H1 (cell line): ENCODE measurements at regions of chr1 and their contacts with region 1.

Region 1: DNA sequence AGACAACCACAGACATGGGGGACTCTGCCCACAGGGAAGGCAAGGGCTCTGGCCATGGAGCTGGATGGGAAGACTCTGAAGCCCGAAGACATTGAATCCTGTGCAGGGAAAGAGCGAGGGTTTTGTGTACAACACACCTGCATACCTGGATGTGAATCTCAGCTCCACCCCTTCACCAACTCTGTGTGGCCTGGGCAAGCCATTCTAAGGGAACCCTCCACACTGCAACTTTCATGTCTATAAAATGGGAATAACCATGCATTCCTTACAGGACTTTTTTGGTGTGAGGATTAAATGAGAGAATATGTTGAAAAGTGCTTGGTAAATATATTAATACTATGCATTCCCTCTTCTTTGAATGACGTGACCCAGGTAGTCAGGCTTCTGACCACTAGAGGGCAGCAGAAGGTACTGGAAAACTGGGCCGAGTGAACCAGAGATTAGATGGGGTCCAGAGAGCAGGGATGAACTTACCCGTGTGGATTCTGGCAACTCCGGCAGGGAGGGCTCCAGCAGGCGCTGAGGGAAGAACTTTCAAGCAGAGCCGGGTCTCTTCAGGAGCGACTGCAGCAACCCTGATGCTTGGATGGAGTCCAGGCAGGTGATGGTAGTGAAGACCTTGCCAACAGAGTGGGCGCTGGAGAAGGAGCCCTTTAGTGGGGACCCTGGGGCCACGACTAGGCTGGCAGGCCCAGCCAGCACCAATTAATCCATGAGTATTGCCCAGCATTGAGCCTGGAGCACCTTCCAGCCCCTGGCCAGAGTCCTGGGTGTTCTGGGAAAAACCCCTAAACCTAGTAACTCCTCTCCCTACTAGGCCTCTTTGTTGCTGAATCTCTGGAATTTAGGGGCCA is 834 bp upstream of the ELF3 start:
- DNase-seq: peak; percentile 38 to 87
- H3K4me3 ChIP-seq: peak overlapping the region in 3 of 4 experiments; percentile 17 to 72 (median 30); a peak in 6 of 8 replicates
- H3K27ac ChIP-seq: peak overlapping the region; percentile 78
- H3K4me1 ChIP-seq: peaks cover 12 to 39% (median 31%) of the 10 kb centered on the region in 4 experiments
- H3K27me3 ChIP-seq: no peaks in the 10 kb centered on the region
- CTCF ChIP-seq: peak in 2 of 3 experiments; percentile 73 to 82; a peak in 3 of 4 replicates
- EP300 ChIP-seq: no peak
- POLR2A ChIP-seq: no peak
- RAD21 ChIP-seq: peak; percentile 80 to 90

Region 2: DNA sequence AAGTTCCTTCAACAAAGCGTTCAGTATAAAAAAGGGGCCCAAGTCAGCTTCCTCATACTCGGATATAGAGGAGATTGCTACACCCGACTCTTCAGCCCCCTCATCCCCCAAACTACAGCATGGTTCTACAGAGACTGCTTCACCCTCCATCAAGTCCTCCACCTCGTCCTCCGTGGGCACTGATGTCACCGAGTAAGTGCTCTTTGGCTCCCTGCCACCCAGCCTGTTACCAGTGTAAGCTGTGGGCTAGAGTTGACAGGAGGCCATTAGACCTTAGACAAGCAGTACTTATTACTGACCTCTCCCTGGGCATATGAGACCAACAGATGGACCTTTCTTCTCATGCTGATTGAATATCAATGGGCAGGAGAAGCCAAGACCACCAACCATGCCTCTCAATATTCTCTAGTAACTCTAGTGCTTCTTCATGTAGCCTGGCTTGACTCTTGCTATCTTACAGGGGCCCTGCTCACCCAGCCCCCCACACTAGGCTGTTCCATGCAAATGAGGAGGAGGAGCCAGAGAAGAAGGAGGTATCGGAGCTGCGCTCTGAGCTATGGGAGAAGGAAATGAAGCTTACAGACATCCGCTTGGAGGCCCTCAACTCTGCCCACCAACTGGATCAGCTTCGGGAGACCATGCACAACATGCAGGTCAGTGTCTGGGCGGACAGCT is 201.5 kb before region 1 on chr1:
- CTCF ChIA-PET with region 1: no interaction called
- POLR2A ChIA-PET with region 1: no interaction called
- DNase-seq: no peak
- H3K4me3 ChIP-seq: no peak overlapping the region
- H3K27ac ChIP-seq: no peak overlapping the region
- H3K4me1 ChIP-seq: no peaks in the 10 kb centered on the region
- H3K27me3 ChIP-seq: no peaks in the 10 kb centered on the region
- CTCF ChIP-seq: no peak
- EP300 ChIP-seq: no peak
- POLR2A ChIP-seq: no peak
- RAD21 ChIP-seq: no peak

Region 3: GRCh38 chr1:201925981-201926645 is 83.4 kb before region 1 on chr1:
- CTCF ChIA-PET with region 1: no interaction called
- POLR2A ChIA-PET with region 1: no interaction called
- DNase-seq: no peak
- H3K4me3 ChIP-seq: no peak overlapping the region
- H3K27ac ChIP-seq: no peak overlapping the region
- H3K4me1 ChIP-seq: no peaks in the 10 kb centered on the region
- H3K27me3 ChIP-seq: no peaks in the 10 kb centered on the region
- CTCF ChIP-seq: no peak
- EP300 ChIP-seq: no peak
- POLR2A ChIP-seq: no peak
- RAD21 ChIP-seq: no peak

Region 4: GRCh38 chr1:202029171-202029665 is 19.7 kb after region 1 on chr1:
- CTCF ChIA-PET with region 1: interaction called, 6 read pairs
- POLR2A ChIA-PET with region 1: interaction called, 74 read pairs
- DNase-seq: no peak
- H3K4me3 ChIP-seq: no peak overlapping the region
- H3K27ac ChIP-seq: no peak overlapping the region
- H3K4me1 ChIP-seq: peaks cover 0 to 1% (median under 1%) of the 10 kb centered on the region in 4 experiments; a peak in 3 of 7 replicates
- H3K27me3 ChIP-seq: no peaks in the 10 kb centered on the region
- CTCF ChIP-seq: no peak
- EP300 ChIP-seq: no peak
- POLR2A ChIP-seq: no peak
- RAD21 ChIP-seq: no peak

Region 5: DNA sequence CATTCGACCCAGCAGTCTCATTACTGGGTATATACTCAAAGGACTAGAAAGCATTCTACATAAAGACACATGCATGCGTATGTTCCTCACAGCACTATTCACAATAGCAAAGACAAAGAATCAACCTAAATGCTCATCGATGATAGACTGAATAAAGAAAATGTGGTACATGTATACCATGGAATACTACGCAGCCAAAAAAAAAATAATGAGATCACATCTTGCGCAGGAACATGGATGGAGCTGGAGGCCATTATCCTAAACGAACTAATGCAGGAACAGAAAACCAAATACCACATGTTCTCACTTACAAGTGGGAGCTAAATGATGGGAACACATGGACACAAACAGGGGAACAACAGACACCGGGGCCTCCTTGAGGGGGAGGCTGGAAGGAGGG is 44.5 kb after region 1 on chr1:
- CTCF ChIA-PET with region 1: interaction called, 9 read pairs
- POLR2A ChIA-PET with region 1: interaction called, 10 read pairs
- DNase-seq: no peak
- H3K4me3 ChIP-seq: no peak overlapping the region
- H3K27ac ChIP-seq: no peak overlapping the region
- H3K4me1 ChIP-seq: no peaks in the 10 kb centered on the region; a peak in 1 of 7 replicates
- H3K27me3 ChIP-seq: no peaks in the 10 kb centered on the region
- CTCF ChIP-seq: no peak
- EP300 ChIP-seq: no peak
- POLR2A ChIP-seq: no peak
- RAD21 ChIP-seq: no peak

Region 6: DNA sequence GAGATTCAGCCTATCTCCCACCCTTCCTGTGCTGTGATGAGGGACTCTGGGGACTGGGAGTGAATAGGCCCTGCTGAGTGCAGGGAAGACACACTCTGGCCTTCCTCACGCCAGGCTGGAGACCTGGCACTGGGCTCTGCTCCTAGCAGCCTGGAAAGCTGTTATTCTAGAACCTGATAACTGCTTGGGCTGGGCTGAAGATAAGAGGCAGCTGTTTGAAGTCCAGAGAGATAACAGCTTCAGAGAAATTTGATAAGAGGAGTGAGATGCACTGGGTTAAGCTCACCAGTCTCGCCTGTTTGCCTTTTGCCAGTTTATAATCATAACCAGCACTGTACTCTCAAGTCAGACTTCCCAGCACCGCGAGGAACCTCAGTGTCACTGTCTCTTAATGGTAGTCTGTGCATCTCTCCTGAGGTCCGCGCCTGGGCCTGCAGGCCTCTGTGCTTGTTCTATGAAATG is 66.5 kb after region 1 on chr1:
- CTCF ChIA-PET with region 1: interaction called, 13 read pairs
- POLR2A ChIA-PET with region 1: interaction called, 15 read pairs
- DNase-seq: no peak
- H3K4me3 ChIP-seq: no peak overlapping the region
- H3K27ac ChIP-seq: no peak overlapping the region
- H3K4me1 ChIP-seq: peaks cover 0 to 4% (median 3%) of the 10 kb centered on the region in 4 experiments; a peak in 4 of 7 replicates
- H3K27me3 ChIP-seq: no peaks in the 10 kb centered on the region
- CTCF ChIP-seq: no peak
- EP300 ChIP-seq: no peak
- POLR2A ChIP-seq: no peak
- RAD21 ChIP-seq: no peak

Region 7: GRCh38 chr1:202090997-202091396 is 81.4 kb after region 1 on chr1:
- CTCF ChIA-PET with region 1: interaction called, 10 read pairs
- POLR2A ChIA-PET with region 1: interaction called, 45 read pairs
- DNase-seq: no peak
- H3K4me3 ChIP-seq: no peak overlapping the region
- H3K27ac ChIP-seq: no peak overlapping the region
- H3K4me1 ChIP-seq: peaks cover 5 to 10% (median 6%) of the 10 kb centered on the region in 4 experiments; a peak in 5 of 7 replicates
- H3K27me3 ChIP-seq: no peaks in the 10 kb centered on the region
- CTCF ChIP-seq: 0 out of 4 replicates have a peak, but pooled peaks of 1 of the 3 experiments have one; percentile 14
- EP300 ChIP-seq: no peak
- POLR2A ChIP-seq: no peak
- RAD21 ChIP-seq: peak; percentile 10 to 30; a peak in 2 of 4 replicates

Region 8: GRCh38 chr1:202112839-202113672 is 103.5 kb after region 1 on chr1:
- CTCF ChIA-PET with region 1: interaction called, 1,014 read pairs
- POLR2A ChIA-PET with region 1: interaction called, 98 read pairs
- DNase-seq: no peak
- H3K4me3 ChIP-seq: no peak overlapping the region
- H3K27ac ChIP-seq: no peak overlapping the region
- H3K4me1 ChIP-seq: peaks cover 2 to 9% (median 4%) of the 10 kb centered on the region in 4 experiments
- H3K27me3 ChIP-seq: no peaks in the 10 kb centered on the region
- CTCF ChIP-seq: no peak
- EP300 ChIP-seq: no peak
- POLR2A ChIP-seq: no peak
- RAD21 ChIP-seq: no peak

Region 9: DNA sequence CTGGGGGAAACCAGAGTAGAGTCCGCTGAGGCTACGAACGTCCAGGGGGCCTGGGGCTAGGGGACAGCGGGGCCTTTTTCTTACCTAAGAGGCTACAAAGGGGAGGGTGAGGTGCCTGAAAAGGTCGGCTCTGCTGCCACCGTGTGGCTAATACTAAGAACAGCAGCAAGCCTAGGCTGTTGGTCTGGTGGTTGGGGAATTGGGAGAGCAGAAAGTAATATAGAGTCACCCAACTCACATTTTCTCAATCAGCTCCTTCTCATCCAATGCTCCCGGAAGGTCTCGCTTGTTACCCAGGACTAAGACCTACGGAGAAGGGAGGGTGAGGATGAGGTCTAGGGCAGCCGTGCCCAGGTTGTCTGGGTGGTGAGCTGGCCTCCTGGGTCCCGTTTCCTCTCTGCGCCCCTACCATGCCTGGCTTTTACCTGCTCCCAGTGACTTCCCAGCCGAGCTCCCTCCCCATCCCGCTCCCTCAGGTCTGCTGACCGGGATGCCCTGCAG is 125.7 kb after region 1 on chr1:
- CTCF ChIA-PET with region 1: interaction called, 1,014 read pairs
- POLR2A ChIA-PET with region 1: interaction called, 12 read pairs
- DNase-seq: peak in 1 of 2 experiments; percentile 69
- H3K4me3 ChIP-seq: no peak overlapping the region
- H3K27ac ChIP-seq: 0 out of 2 replicates have a peak overlapping the region, but pooled peaks have one; percentile 17
- H3K4me1 ChIP-seq: peaks cover 0 to 11% (median 4%) of the 10 kb centered on the region in 4 experiments; a peak in 3 of 7 replicates
- H3K27me3 ChIP-seq: no peaks in the 10 kb centered on the region; a peak in 1 of 7 replicates
- CTCF ChIP-seq: peak in 2 of 3 experiments; percentile 84 to 87; a peak in 3 of 4 replicates
- EP300 ChIP-seq: no peak
- POLR2A ChIP-seq: no peak
- RAD21 ChIP-seq: peak; percentile 77 to 81